CD8-positive, alpha-beta T cell (primary cell): ENCODE measurements at regions of chr6 and their contacts with region 1.

Region 1: DNA sequence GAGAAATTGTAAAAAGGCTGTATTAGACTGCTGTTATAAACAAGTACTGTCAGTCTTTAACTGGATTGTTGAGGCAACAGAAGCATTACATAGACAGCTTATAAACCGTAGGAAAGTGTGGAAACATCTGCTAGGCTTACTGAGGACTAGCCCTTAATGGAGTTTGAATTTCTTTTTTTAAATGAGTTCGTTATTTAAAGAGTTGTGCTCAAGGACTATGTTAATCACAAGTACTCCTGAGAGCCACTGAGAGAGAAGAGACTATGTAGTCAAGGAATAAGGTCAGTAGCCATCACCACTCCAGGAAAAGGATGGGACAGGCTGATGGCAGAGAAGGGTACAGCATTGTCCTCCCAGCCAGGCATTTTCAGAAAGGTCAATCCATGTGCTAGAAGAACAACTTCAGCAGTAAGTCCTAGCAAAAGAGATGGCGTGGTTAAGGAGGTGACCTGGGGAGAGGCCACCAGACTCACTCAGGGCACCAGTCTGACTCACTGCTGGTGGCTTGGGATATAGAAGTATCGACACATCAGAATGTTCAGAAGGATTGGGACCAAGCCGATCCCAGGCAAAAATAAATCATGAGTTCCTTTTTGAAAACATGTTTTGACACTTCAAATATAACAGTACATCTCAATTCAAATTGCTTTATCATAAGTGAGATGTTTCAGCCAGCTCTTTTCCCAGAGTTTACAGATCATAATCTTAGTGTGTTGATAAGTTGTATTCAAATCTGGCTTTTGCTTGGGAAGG is 6.4 kb downstream of the RPS12 start:
- DNase-seq: peak in 1 of 9 experiments; percentile 16
- ATAC-seq: no peak
- H3K4me3 ChIP-seq: no peak overlapping the region
- H3K4me3 Mint-ChIP-seq: no peak overlapping the region
- H3K27ac ChIP-seq: peak overlapping the region in 1 of 2 experiments; percentile 44
- H3K27ac Mint-ChIP-seq: peak overlapping the region; percentile 81
- H3K4me1 ChIP-seq: peaks cover 25% of the 10 kb centered on the region
- H3K4me1 Mint-ChIP-seq: peaks cover 55% of the 10 kb centered on the region
- H3K27me3 ChIP-seq: no peaks in the 10 kb centered on the region
- H3K27me3 Mint-ChIP-seq: no peaks in the 10 kb centered on the region
- CTCF ChIP-seq: no peak

Region 2: DNA sequence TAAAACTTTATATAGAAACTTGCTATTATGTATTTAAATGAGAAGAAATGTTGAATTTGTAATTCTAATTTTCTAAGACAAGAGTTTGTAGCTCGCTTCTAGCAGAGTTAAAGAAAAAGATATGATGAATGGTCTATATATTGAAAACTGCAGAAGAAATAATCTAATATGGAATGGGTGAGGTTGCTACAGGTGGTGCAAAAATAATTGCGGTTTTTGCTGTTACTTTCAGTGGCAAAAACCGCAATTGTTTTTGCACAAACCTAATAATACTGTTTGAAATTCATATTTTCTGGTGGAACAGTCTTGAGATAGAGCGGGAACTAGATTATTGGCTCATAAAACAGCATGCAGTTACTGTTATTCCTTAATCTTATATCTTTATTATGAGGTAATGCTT is 444.3 kb after region 1 on chr6:
- CTCF ChIA-PET with region 1: no interaction called
- POLR2A ChIA-PET with region 1: no interaction called
- intact Hi-C with region 1: no loop called
- DNase-seq: no peak
- ATAC-seq: no peak
- H3K4me3 ChIP-seq: no peak overlapping the region
- H3K4me3 Mint-ChIP-seq: no peak overlapping the region
- H3K27ac ChIP-seq: no peak overlapping the region
- H3K27ac Mint-ChIP-seq: no peak overlapping the region
- H3K4me1 ChIP-seq: no peaks in the 10 kb centered on the region
- H3K4me1 Mint-ChIP-seq: no peaks in the 10 kb centered on the region
- H3K27me3 ChIP-seq: no peaks in the 10 kb centered on the region
- H3K27me3 Mint-ChIP-seq: no peaks in the 10 kb centered on the region
- CTCF ChIP-seq: no peak

Region 3: GRCh38 chr6:133512410-133513016 is 691.7 kb after region 1 on chr6:
- CTCF ChIA-PET with region 1: no interaction called
- POLR2A ChIA-PET with region 1: no interaction called
- intact Hi-C with region 1: loop called in 1 of 2 experiments (anchors 5 kb)
- DNase-seq: peak in 2 of 9 experiments; percentile 20 to 23
- ATAC-seq: no peak
- H3K4me3 ChIP-seq: no peak overlapping the region
- H3K4me3 Mint-ChIP-seq: no peak overlapping the region
- H3K27ac ChIP-seq: no peak overlapping the region
- H3K27ac Mint-ChIP-seq: no peak overlapping the region
- H3K4me1 ChIP-seq: no peaks in the 10 kb centered on the region
- H3K4me1 Mint-ChIP-seq: no peaks in the 10 kb centered on the region
- H3K27me3 ChIP-seq: no peaks in the 10 kb centered on the region
- H3K27me3 Mint-ChIP-seq: peaks cover 18% of the 10 kb centered on the region
- CTCF ChIP-seq: no peak